Heart right ventricle (tissue), 16 donors: ENCODE measurements at regions of chr3 and their contacts with region 1.

Region 1: GRCh38 chr3:170317954-170318353 is 39.6 kb upstream of the SKIL start:
- DNase-seq: no peak
- ATAC-seq: no peak
- H3K4me3 ChIP-seq: no peak overlapping the region
- H3K27ac ChIP-seq: no peak overlapping the region
- H3K4me1 ChIP-seq: peaks cover 0 to 18% (median 0%) of the 10 kb centered on the region in 9 donors
- H3K27me3 ChIP-seq: no peaks in the 10 kb centered on the region
- CTCF ChIP-seq: no peak

Region 2: GRCh38 chr3:170372190-170372879 is 54.4 kb after region 1 on chr3:
- intact Hi-C with region 1: loop called in 1 of 10 experiments (anchors 10 kb)
- DNase-seq: no peak
- ATAC-seq: no peak
- H3K4me3 ChIP-seq: no peak overlapping the region
- H3K27ac ChIP-seq: no peak overlapping the region
- H3K4me1 ChIP-seq: peaks cover 0 to 70% (median 38%) of the 10 kb centered on the region in 9 donors
- H3K27me3 ChIP-seq: no peaks in the 10 kb centered on the region
- CTCF ChIP-seq: no peak

Region 3: GRCh38 chr3:170405101-170405500 is 87.1 kb after region 1 on chr3:
- intact Hi-C with region 1: loop called in 8 of 10 experiments (anchors 5 to 10 kb)
- DNase-seq: no peak
- ATAC-seq: no peak
- H3K4me3 ChIP-seq: no peak overlapping the region
- H3K27ac ChIP-seq: no peak overlapping the region
- H3K4me1 ChIP-seq: no peaks in the 10 kb centered on the region
- H3K27me3 ChIP-seq: no peaks in the 10 kb centered on the region
- CTCF ChIP-seq: no peak

Region 4: GRCh38 chr3:170414202-170414663 is 96.3 kb after region 1 on chr3:
- intact Hi-C with region 1: loop called in 8 of 10 experiments (anchors 5 to 10 kb)
- DNase-seq: peak in 1 of 2 donors; percentile 25
- ATAC-seq: peak in 5 of 8 donors; percentile 29 to 51 (median 42)
- H3K4me3 ChIP-seq: no peak overlapping the region
- H3K27ac ChIP-seq: no peak overlapping the region
- H3K4me1 ChIP-seq: peaks cover 1 to 17% (median 12%) of the 10 kb centered on the region in 9 donors
- H3K27me3 ChIP-seq: peaks cover 0 to 38% (median 31%) of the 10 kb centered on the region in 7 donors
- CTCF ChIP-seq: peak; percentile 82 to 98 (median 92)

Region 5: GRCh38 chr3:170689893-170690660 is 372.1 kb after region 1 on chr3:
- intact Hi-C with region 1: loop called in 3 of 10 experiments (anchors 5 to 10 kb)
- DNase-seq: peak; percentile 57 to 72
- ATAC-seq: peak in 7 of 8 donors; percentile 51 to 84 (median 73)
- H3K4me3 ChIP-seq: no peak overlapping the region
- H3K27ac ChIP-seq: no peak overlapping the region
- H3K4me1 ChIP-seq: peaks cover 0 to 5% (median 0%) of the 10 kb centered on the region in 9 donors
- H3K27me3 ChIP-seq: no peaks in the 10 kb centered on the region
- CTCF ChIP-seq: peak; percentile 48 to 84 (median 78)